ENCODE measurements at regions of chr21 and their contacts with region 1.

Region 1: DNA sequence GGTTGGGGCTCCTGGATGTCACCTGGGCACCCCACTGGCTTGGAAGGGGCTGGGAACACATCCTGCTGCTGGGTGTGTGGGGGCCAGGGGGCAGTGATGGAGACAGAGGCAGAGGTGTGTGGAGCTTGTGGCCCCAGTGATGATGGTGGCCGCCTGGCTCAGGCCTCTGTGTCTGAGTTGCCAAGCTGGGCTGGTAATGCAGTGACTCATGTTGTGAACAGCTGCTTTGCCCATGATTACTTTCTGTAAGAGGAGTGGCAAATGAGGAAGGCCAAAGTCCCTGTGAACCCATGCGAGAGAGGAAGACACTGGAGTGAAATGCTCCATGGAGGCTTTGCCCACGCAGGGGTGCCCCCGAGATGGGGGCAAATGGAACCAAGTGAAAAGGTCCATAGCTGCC is 86.8 kb downstream of the KCNJ6 start:
- DNase-seq: no peak
- ATAC-seq: no peak
- H3K4me3 ChIP-seq: no peak overlapping the region
- H3K27ac ChIP-seq: peak overlapping the region in 1 of 10 donors; percentile 50
- H3K4me1 ChIP-seq: no peaks in the 10 kb centered on the region
- H3K27me3 ChIP-seq: peaks cover 0 to 56% (median 7%) of the 10 kb centered on the region in 7 donors
- CTCF ChIP-seq: no peak

Region 2: DNA sequence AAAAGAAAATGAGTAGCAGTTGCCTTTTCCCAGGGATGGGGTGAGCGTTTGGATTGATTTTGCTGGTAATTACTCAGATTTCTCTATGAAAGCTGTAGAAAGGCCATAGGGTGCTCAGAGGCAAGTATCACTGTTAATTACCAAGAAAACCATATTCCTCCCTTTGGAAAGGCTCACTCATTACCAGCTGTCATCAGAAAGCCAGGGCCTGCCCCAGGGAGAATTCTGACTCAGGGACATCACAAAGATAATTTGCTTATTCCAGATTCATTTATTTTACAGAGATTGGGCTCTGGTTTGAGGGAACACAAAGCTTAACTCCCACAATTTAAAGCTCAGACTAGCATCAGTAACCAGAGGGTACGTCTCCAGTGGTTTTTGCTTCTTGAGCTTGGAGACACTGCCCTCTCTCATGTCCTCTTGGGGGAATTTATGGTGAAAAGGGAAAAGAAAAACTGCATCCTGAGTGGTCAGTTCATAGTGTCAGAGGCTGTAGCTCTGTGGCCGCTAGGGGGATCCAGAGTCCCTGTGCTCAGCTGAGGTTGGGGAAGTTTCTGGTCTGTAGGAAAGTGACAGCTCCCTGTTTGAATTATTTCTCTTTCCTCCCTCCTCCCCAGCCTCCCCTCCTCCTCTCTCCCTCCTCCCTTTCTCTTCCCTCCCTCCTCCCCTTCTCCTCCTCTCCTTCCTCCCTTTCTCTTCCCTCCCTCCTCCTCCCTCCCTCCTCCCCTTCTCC is 117.4 kb before region 1 on chr21:
- intact Hi-C with region 1: no loop called
- DNase-seq: peak; percentile 59 to 63
- ATAC-seq: peak; percentile 73 to 91 (median 82)
- H3K4me3 ChIP-seq: no peak overlapping the region
- H3K27ac ChIP-seq: no peak overlapping the region
- H3K4me1 ChIP-seq: peaks cover 0 to 20% (median 12%) of the 10 kb centered on the region in 9 donors
- H3K27me3 ChIP-seq: peaks cover 0 to 6% (median 0%) of the 10 kb centered on the region in 7 donors
- CTCF ChIP-seq: peak; percentile 61 to 86 (median 80)

Region 3: DNA sequence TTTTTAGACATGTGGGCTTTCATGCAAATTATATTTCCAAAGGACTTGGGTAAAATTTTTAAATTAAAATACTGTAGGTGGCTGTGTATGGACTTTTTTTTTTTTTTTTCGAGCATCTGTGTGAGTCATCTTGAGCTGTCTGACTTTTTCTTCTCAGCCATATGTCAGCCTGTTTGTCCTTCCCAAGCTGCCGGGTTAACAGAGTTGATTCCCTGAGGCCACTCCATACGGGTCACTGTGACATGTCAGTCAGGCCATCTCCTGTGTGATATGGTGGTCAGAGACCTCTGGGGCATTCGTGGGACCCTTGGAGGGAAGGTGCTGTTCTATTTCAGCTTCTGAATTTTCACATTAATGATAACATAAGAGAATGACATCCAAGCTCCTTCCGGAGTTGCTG is 61.5 kb before region 1 on chr21:
- intact Hi-C with region 1: loop called in 1 of 10 experiments (anchors 10 kb)
- DNase-seq: no peak
- ATAC-seq: no peak
- H3K4me3 ChIP-seq: no peak overlapping the region
- H3K27ac ChIP-seq: no peak overlapping the region
- H3K4me1 ChIP-seq: no peaks in the 10 kb centered on the region
- H3K27me3 ChIP-seq: peaks cover 0 to 10% (median 0%) of the 10 kb centered on the region in 7 donors
- CTCF ChIP-seq: no peak

Region 4: GRCh38 chr21:37886120-37886519 is 56.7 kb after region 1 on chr21:
- intact Hi-C with region 1: loop called in 2 of 10 experiments (anchors 5 to 10 kb)
- DNase-seq: no peak
- ATAC-seq: no peak
- H3K4me3 ChIP-seq: no peak overlapping the region
- H3K27ac ChIP-seq: no peak overlapping the region
- H3K4me1 ChIP-seq: no peaks in the 10 kb centered on the region
- H3K27me3 ChIP-seq: peaks cover 0 to 25% (median 9%) of the 10 kb centered on the region in 7 donors
- CTCF ChIP-seq: no peak

Region 5: DNA sequence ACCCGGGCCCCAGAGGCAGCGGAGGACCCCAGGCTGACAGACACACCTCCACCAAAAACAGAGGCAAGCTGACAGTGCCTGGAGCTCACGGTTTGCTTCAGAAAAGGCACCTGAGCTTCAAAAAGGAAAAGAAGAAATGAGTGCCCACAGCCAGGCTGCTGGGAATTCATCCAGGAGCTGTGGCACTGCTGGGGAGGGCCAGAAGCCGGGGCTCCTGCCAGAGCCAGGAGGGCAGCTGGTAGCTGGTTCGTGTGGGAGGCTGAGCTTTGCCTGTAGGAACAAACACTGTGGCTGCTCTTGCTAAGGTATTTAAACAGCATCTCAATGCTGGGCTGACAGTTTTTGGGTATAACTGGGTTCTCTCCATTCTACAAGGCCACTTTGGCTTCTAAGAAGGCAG is 67.3 kb after region 1 on chr21:
- intact Hi-C with region 1: loop called in 1 of 10 experiments (anchors 10 kb)
- DNase-seq: no peak
- ATAC-seq: peak in 1 of 8 donors; percentile 61
- H3K4me3 ChIP-seq: no peak overlapping the region
- H3K27ac ChIP-seq: no peak overlapping the region
- H3K4me1 ChIP-seq: no peaks in the 10 kb centered on the region
- H3K27me3 ChIP-seq: peaks cover 0 to 50% (median 17%) of the 10 kb centered on the region in 7 donors
- CTCF ChIP-seq: no peak